ENCODE measurements at regions of chr16 and their contacts with region 1.

Region 1: DNA sequence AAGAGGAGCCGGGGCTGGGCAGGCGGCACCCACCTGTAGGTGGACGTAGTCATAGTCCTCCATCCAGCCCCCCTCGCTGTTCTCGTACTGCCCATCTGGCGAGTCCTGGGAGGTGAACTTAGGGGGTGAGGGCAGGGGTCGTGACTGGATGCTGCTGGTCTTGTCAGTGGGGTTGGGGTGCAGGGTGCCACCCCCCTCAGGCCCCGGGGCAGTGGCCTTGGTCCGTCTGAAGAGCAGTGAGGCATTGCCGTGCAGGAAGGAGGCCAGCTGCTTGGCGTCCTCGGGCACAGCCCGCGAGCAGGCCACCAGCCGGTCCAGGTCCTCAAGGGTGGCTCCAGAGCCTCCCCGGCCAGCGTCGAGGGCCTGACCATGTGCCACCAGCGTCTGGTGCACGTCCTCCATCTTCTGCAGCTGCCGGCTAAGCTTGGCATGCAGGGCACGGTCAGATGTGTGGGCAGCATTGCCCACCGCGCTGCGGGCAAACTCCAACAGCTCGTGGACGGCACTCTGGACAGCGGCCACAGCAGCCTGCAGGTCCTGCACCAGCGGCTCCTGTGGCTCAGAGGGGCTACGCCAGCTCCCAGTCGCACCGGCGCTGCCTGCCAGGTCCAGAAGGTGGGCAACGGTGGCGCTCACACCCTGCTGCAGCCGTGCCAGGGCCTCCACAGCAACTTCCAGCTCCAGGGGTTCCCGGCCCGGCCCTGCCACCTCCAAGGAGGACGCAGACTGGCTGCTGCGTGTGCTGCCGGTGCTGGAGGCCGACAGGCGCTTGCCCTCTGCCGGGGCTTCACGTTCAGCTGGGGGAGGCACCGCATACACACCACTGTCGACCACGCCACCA is 16.3 kb downstream of the CTRB1 start:
- DNase-seq: no peak
- H3K4me3 ChIP-seq: no peak overlapping the region
- H3K27me3 ChIP-seq: no peaks in the 10 kb centered on the region
- CTCF ChIP-seq: no peak

Region 2: GRCh38 chr16:74998481-74999218 is 236.4 kb before region 1 on chr16 and contains the start of gene ZNRF1:
- CTCF ChIA-PET with region 1: no interaction called
- POLR2A ChIA-PET with region 1: no interaction called
- DNase-seq: no peak
- H3K4me3 ChIP-seq: peak within 1 kb of the TSS; percentile 72
- H3K27me3 ChIP-seq: peaks cover 1% of the 10 kb centered on the region
- CTCF ChIP-seq: peak; percentile 71
- polyA plus RNA-seq, gene ZNRF1: 21.7 and 24.1 TPM in 2 replicates

Region 3: GRCh38 chr16:75244844-75245758 is 10.0 kb after region 1 on chr16:
- CTCF ChIA-PET with region 1: interaction called, 14 read pairs
- POLR2A ChIA-PET with region 1: no interaction called
- DNase-seq: peak; percentile 80
- H3K4me3 ChIP-seq: no peak overlapping the region
- H3K27me3 ChIP-seq: no peaks in the 10 kb centered on the region
- CTCF ChIP-seq: no peak

Region 4: GRCh38 chr16:75272097-75272551 is 37.0 kb after region 1 on chr16:
- CTCF ChIA-PET with region 1: interaction called, 10 read pairs
- POLR2A ChIA-PET with region 1: no interaction called
- DNase-seq: no peak
- H3K4me3 ChIP-seq: no peak overlapping the region
- H3K27me3 ChIP-seq: no peaks in the 10 kb centered on the region
- CTCF ChIP-seq: no peak

Region 5: GRCh38 chr16:75311383-75311938 is 76.4 kb after region 1 on chr16:
- CTCF ChIA-PET with region 1: interaction called, 12 read pairs
- POLR2A ChIA-PET with region 1: no interaction called
- DNase-seq: no peak
- H3K4me3 ChIP-seq: no peak overlapping the region
- H3K27me3 ChIP-seq: no peaks in the 10 kb centered on the region
- CTCF ChIP-seq: no peak

Region 6: GRCh38 chr16:75379911-75380847 is 145.1 kb after region 1 on chr16:
- CTCF ChIA-PET with region 1: interaction called, 25 read pairs
- POLR2A ChIA-PET with region 1: no interaction called
- DNase-seq: no peak
- H3K4me3 ChIP-seq: no peak overlapping the region
- H3K27me3 ChIP-seq: no peaks in the 10 kb centered on the region
- CTCF ChIP-seq: no peak

Region 7: GRCh38 chr16:75402821-75403475 is 167.9 kb after region 1 on chr16:
- CTCF ChIA-PET with region 1: interaction called, 33 read pairs
- POLR2A ChIA-PET with region 1: no interaction called
- DNase-seq: no peak
- H3K4me3 ChIP-seq: no peak overlapping the region
- H3K27me3 ChIP-seq: no peaks in the 10 kb centered on the region
- CTCF ChIP-seq: peak; percentile 64

Measured in BJ (cell line).